Posterior vena cava (tissue), 2 donors: ENCODE measurements at regions of chr16 and their contacts with region 1.

Region 1: DNA sequence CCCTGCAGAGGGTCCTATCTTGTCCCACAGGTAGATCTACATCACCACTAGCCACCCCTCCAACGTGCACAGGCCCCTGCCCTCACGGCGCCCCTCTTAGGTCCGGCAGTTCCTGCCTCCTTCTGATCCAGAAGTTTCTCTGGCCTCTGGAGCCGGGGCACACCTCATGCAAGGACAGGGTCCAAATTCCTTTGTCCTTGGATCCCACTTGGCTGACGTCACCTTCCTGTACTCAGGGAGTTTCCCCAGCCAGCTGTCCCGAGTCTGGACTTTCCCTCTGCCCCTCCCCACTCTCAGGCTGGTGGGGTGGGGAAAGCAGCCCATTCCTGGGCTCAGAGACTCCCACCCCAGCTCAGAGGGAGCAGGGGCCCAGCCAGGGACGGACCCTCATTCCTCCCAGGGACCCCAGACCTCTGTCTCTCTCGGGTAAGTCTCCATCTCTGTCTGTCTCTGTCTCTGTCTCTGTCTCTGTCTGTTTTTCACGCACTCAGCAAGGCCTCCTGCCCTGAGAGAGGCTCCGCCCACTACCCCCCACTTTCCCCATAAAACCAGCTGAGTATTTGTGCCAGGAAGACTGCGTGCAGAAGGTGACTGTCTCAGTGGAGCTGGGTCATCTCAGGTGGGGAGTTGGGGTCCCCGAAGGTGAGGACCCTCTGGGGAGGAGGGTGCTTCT is at the start of gene IL32:
- DNase-seq: no peak
- total RNA-seq, gene IL32: 56.8 to 65.4 TPM

Region 2: DNA sequence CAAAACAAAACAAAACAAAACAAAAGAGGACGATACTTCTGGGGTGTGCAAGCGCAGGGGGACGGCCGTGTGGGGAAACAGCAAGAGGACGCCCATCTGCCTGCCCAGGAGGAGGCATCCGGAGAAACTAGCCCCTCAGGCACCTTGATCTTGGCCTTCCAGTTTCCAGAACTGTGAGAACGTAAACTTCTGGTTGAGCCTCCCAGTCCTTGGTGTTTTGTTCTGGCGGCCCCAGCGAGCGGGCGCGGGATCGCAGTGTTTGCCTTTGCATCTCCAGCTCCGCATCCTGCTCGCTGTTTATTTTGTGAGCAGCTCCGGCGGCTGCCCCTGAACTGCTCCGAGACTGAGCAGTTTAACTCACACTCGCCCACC is 19.9 kb before region 1 on chr16:
- intact Hi-C with region 1: loop called in 1 of 2 experiments (anchors 1 kb)
- DNase-seq: no peak

Region 3: GRCh38 chr16:3112058-3112880 is 47.1 kb after region 1 on chr16 and contains the start of gene ZNF205:
- intact Hi-C with region 1: loop called in 1 of 2 experiments (anchors 10 kb)
- DNase-seq: no peak
- total RNA-seq, gene ZNF205: 7.6 to 8.3 TPM

Region 4: DNA sequence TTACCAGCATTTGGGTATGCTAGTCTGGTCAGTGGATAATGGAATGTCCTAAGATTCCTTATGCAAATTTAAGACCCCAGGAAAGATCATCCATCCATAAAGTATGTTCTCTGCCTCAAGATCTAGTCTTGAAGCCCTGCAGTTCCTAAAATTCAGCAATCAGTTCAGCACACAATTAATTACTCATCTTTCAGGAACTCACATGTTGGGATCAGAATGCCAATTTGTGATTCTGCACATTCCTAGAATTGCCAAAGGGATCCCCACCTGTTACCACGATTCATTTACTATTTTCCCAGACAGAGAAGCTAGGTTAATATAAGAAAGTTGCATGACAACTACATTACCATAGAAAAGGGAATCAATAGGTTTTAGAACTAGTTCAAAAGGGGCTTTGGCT is 293.7 kb after region 1 on chr16:
- intact Hi-C with region 1: loop called in 1 of 2 experiments (anchors 5 kb)
- DNase-seq: no peak